ENCODE measurements at regions of chr3 and their contacts with region 1.

Region 1: DNA sequence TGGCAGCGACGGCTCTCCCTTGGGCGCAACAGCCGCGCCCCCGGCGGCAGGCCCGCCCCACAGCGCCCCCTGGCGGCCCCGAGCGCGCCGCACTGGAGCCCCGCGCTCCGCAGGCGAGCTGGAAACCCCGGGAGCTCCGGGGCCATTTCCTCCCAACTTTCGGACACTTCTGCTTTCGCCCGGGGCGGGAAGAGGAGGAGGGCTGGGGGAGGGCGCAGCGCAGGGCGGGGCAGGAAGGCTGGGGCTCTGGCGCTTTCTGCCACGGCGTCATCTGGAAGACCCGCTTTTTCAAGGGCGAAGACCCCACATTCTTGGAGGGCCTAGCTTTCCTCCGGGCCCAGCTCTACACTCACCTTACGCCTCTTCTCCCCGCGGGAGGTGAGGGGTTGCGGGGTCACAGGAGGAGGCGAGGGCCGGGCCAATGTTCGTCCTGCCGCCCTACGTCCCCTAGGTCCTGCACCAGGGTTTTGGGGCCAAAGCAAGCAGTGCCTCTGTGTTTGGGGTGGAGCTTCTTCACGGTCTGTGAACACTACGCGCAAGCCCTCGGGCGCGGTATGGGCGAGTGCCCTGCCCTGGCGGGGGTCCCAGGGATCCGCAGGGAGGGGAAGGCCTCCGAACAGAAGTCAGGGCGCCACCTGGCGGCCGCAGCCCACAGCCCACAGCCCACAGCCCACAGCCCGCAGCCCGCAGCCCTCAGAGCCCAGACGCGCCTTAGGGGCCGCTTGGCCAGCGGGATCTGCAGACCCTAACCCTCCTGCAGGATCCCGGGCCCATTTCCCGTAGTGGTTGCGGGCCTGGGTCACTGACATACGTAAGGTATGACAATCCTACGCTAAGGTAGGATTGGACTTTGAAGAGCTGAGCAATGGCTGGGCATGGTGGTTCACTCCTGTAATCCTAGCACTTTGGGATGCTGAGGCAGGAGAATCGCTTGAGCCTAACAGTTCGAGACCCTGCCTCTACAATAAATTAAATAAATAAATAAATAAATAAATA is 31.1 kb downstream of the FOXL2 start:
- DNase-seq: peak; percentile 68 to 85 (median 75)
- H3K4me3 ChIP-seq: peak overlapping the region; percentile 90
- H3K4me3 Mint-ChIP-seq: peak overlapping the region; percentile 83 to 94 (median 85)
- H3K27ac ChIP-seq: peak overlapping the region; percentile 73
- H3K27ac Mint-ChIP-seq: peak overlapping the region in 6 of 8 donors; percentile 61 to 96 (median 63)
- H3K4me1 ChIP-seq: peaks cover 5% of the 10 kb centered on the region
- H3K4me1 Mint-ChIP-seq: peaks cover 5 to 6% (median 6%) of the 10 kb centered on the region in 3 donors
- H3K27me3 ChIP-seq: no peaks in the 10 kb centered on the region
- H3K27me3 Mint-ChIP-seq: peaks cover 5 to 7% of the 10 kb centered on the region in 2 donors

Region 2: DNA sequence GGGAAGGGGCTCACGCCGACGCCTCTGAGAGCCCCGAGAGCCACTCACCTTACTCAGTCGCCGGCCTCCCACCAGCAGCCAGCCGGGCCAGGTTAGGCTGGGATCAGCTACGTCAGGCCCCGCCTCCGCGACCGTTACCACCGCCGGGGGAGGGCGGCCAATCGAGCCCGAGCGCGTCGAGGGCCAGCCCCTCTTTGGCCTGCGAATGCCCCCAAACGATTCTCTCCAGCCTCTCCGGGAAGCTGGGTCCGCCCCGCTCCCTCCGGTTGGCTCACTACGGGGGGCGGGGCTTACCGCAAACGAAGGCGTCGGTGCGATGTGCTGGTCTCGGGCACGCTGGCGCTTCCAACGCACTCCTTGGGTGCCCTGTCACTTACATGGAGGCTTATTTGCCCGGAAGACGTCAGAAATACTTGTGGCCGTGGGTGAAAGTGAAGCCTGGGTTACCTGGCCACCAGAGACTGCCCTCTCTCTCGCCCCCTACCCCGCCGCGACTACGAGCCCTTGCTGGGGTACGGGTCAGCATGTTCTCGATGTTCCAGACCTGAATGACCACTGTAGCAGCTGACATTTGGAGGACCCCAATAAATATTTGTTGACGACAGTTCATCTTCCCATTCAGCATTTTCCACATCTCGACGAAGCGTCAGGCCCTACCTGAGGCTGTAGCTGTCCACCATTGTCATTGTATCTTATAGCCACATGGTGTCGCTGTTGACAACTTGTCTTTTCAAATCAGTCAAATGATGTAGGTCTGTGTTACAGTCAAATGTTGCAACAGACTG is 321.5 kb before region 1 on chr3 and contains the start of gene CEP70:
- CTCF ChIA-PET with region 1: interaction called, 285 read pairs
- POLR2A ChIA-PET with region 1: interaction called, 18 read pairs
- DNase-seq: peak; percentile 87 to 94 (median 92)
- H3K4me3 ChIP-seq: peak within 1 kb of the TSS; percentile 94
- H3K4me3 Mint-ChIP-seq: peak within 1 kb of the TSS; percentile 85 to 98 (median 95)
- H3K27ac ChIP-seq: peak within 1 kb of the TSS; percentile 87
- H3K27ac Mint-ChIP-seq: peak within 1 kb of the TSS; percentile 85 to 100 (median 95)
- H3K4me1 ChIP-seq: no peaks in the 10 kb centered on the region
- H3K4me1 Mint-ChIP-seq: peaks cover 6 to 10% (median 9%) of the 10 kb centered on the region in 3 donors
- H3K27me3 ChIP-seq: no peaks in the 10 kb centered on the region
- H3K27me3 Mint-ChIP-seq: peaks cover 0 to 1% of the 10 kb centered on the region in 2 donors
- total RNA-seq, gene CEP70: 8.0 to 8.4 TPM

Region 3: DNA sequence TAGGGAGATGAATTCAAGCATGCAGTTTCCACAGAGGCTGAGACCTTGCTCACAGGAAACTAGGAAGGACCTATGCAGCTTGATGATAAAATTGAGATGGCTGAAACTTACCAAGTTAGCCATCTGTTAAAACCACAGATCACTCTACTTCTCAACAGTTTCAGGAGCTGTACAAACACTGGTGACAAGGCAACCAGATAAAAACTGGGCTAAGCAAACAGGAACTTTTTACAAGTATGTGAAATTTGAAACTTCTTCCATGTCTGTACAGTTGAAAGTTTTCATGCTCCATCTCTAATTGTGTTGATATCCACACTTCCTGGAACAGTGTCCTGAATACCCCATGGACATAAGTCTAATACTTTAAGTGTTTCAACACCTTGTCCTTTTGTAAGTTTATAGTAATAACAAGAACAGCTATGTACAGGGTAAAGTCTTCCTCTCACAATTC is 229.0 kb before region 1 on chr3:
- CTCF ChIA-PET with region 1: interaction called, 56 read pairs
- POLR2A ChIA-PET with region 1: interaction called, 4 read pairs
- DNase-seq: no peak
- H3K4me3 ChIP-seq: no peak overlapping the region
- H3K4me3 Mint-ChIP-seq: no peak overlapping the region
- H3K27ac ChIP-seq: no peak overlapping the region
- H3K27ac Mint-ChIP-seq: peak overlapping the region in 4 of 8 donors; percentile 3 to 48 (median 7)
- H3K4me1 ChIP-seq: no peaks in the 10 kb centered on the region
- H3K4me1 Mint-ChIP-seq: peaks cover 7 to 8% (median 7%) of the 10 kb centered on the region in 3 donors
- H3K27me3 ChIP-seq: no peaks in the 10 kb centered on the region
- H3K27me3 Mint-ChIP-seq: no peaks in the 10 kb centered on the region

Region 4: GRCh38 chr3:138712086-138712485 is 203.7 kb before region 1 on chr3:
- CTCF ChIA-PET with region 1: interaction called, 27 read pairs
- POLR2A ChIA-PET with region 1: no interaction called
- DNase-seq: no peak
- H3K4me3 ChIP-seq: no peak overlapping the region
- H3K4me3 Mint-ChIP-seq: no peak overlapping the region
- H3K27ac ChIP-seq: no peak overlapping the region
- H3K27ac Mint-ChIP-seq: no peak overlapping the region
- H3K4me1 ChIP-seq: no peaks in the 10 kb centered on the region
- H3K4me1 Mint-ChIP-seq: no peaks in the 10 kb centered on the region
- H3K27me3 ChIP-seq: no peaks in the 10 kb centered on the region
- H3K27me3 Mint-ChIP-seq: no peaks in the 10 kb centered on the region

Region 5: GRCh38 chr3:138732456-138732855 is 183.3 kb before region 1 on chr3:
- CTCF ChIA-PET with region 1: interaction called, 10 read pairs
- POLR2A ChIA-PET with region 1: no interaction called
- DNase-seq: no peak
- H3K4me3 ChIP-seq: no peak overlapping the region
- H3K4me3 Mint-ChIP-seq: no peak overlapping the region
- H3K27ac ChIP-seq: no peak overlapping the region
- H3K27ac Mint-ChIP-seq: peak overlapping the region in 1 of 8 donors; percentile 59
- H3K4me1 ChIP-seq: no peaks in the 10 kb centered on the region
- H3K4me1 Mint-ChIP-seq: no peaks in the 10 kb centered on the region
- H3K27me3 ChIP-seq: no peaks in the 10 kb centered on the region
- H3K27me3 Mint-ChIP-seq: no peaks in the 10 kb centered on the region

Region 6: GRCh38 chr3:138899351-138899991 is 16.3 kb before region 1 on chr3:
- CTCF ChIA-PET with region 1: interaction called, 18 read pairs
- POLR2A ChIA-PET with region 1: no interaction called
- DNase-seq: no peak
- H3K4me3 ChIP-seq: no peak overlapping the region
- H3K4me3 Mint-ChIP-seq: no peak overlapping the region
- H3K27ac ChIP-seq: no peak overlapping the region
- H3K27ac Mint-ChIP-seq: peak overlapping the region in 1 of 8 donors; percentile 33
- H3K4me1 ChIP-seq: no peaks in the 10 kb centered on the region
- H3K4me1 Mint-ChIP-seq: no peaks in the 10 kb centered on the region
- H3K27me3 ChIP-seq: no peaks in the 10 kb centered on the region
- H3K27me3 Mint-ChIP-seq: no peaks in the 10 kb centered on the region

Region 7: GRCh38 chr3:138935848-138936740 is 20.3 kb after region 1 on chr3:
- CTCF ChIA-PET with region 1: interaction called, 89 read pairs
- POLR2A ChIA-PET with region 1: no interaction called
- DNase-seq: peak; percentile 54 to 72 (median 62)
- H3K4me3 ChIP-seq: peak overlapping the region; percentile 65
- H3K4me3 Mint-ChIP-seq: peak overlapping the region; percentile 67 to 80 (median 74)
- H3K27ac ChIP-seq: peak overlapping the region; percentile 7
- H3K27ac Mint-ChIP-seq: no peak overlapping the region
- H3K4me1 ChIP-seq: peaks cover 44% of the 10 kb centered on the region
- H3K4me1 Mint-ChIP-seq: peaks cover 34 to 44% (median 43%) of the 10 kb centered on the region in 3 donors
- H3K27me3 ChIP-seq: peaks cover 53% of the 10 kb centered on the region
- H3K27me3 Mint-ChIP-seq: peaks cover 71 to 84% of the 10 kb centered on the region in 2 donors

Region 8: DNA sequence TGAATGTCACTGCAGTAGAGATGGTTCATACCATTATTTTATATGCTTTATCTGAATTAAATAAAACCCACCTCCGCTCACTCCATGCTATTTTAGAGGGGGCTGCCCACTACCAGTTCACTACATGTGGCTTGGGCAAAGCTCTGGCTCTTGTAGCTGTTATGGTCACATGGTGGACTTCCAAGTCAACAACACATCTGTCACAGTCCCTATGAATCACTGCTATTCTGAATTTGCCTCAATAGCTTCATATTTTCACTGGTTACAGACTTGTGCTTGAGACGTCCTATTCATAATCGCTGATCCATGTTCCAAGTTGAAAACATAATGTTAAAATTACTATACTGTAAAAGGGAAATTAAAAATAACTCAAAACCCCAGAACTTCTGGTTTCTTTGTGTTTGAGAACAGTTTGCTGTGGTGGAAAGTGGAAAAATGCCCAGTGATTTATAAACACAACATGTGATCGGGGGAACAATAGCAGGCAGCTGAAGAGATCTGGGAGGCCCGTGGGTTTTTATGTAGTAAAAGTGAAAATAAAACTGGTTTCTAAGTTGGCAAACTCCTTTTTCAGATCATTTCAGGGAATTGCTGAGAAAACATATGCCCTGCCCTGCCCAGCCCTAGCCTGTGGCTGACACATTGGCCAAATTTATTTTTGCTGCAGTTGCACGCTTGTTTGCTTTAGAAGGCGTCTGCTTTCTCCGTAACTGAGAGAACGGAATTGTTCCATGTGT is 257.7 kb after region 1 on chr3:
- CTCF ChIA-PET with region 1: no interaction called
- POLR2A ChIA-PET with region 1: no interaction called
- DNase-seq: no peak
- H3K4me3 ChIP-seq: no peak overlapping the region
- H3K4me3 Mint-ChIP-seq: peak overlapping the region in 1 of 7 donors; percentile 13
- H3K27ac ChIP-seq: no peak overlapping the region
- H3K27ac Mint-ChIP-seq: no peak overlapping the region
- H3K4me1 ChIP-seq: no peaks in the 10 kb centered on the region
- H3K4me1 Mint-ChIP-seq: peaks cover 2 to 4% (median 3%) of the 10 kb centered on the region in 3 donors
- H3K27me3 ChIP-seq: no peaks in the 10 kb centered on the region
- H3K27me3 Mint-ChIP-seq: peaks cover 11 to 12% of the 10 kb centered on the region in 2 donors

Measured in CD8-positive, alpha-beta memory T cell (primary cell).